Gastrocnemius medialis (tissue), 4 donors: ENCODE measurements at regions of chr14 and their contacts with region 1.

Region 1: GRCh38 chr14:65412032-65412846 is at the start of gene FUT8:
- DNase-seq: peak; percentile 90 to 95
- ATAC-seq: peak; percentile 77 to 83
- H3K4me3 ChIP-seq: peak within 1 kb of the TSS; percentile 79 to 98 (median 94)
- H3K27ac ChIP-seq: peak within 1 kb of the TSS; percentile 82 to 93 (median 90)
- H3K4me1 ChIP-seq: peaks cover 4 to 8% of the 10 kb centered on the region in 2 donors
- H3K27me3 ChIP-seq: no peaks in the 10 kb centered on the region
- CTCF ChIP-seq: peak; percentile 42 to 78 (median 58)
- POLR2A ChIP-seq: peak; percentile 50 to 55
- total RNA-seq, gene FUT8: 6.5 to 11.3 (median 9.3) TPM

Region 2: GRCh38 chr14:64914237-64914971 is 497.8 kb before region 1 on chr14 and contains the start of gene CHURC1:
- in situ Hi-C with region 1: no loop called
- intact Hi-C with region 1: loop called (anchors 5 kb)
- DNase-seq: peak; percentile 97 to 99
- ATAC-seq: peak; percentile 99
- H3K4me3 ChIP-seq: peak within 1 kb of the TSS; percentile 86 to 100 (median 90)
- H3K27ac ChIP-seq: peak within 1 kb of the TSS; percentile 95 to 98 (median 97)
- H3K4me1 ChIP-seq: peaks cover 34 to 39% of the 10 kb centered on the region in 2 donors
- H3K27me3 ChIP-seq: no peaks in the 10 kb centered on the region
- CTCF ChIP-seq: no peak
- POLR2A ChIP-seq: peak; percentile 79 to 91
- total RNA-seq, gene CHURC1: 47.9 to 108 (median 79.6) TPM

Region 3: DNA sequence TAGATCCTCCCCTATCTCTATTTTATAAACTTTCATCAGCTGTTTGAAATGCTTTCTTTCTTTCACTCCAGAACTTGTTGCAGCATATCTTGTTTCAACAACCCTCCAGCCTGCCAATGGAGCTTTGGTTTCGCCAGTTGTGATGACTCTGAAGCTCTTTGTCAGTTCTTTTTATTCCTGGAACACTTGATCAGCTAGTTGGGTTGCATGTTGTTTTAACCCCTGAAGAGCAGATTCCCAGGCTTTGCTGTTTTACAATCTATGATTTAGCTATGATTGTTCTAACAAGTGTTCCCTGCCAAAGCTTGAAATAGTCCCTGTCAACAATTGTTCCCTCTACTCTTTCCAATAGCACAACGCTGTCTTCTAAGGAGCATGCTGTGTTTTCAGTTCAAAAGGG is 50.3 kb before region 1 on chr14:
- in situ Hi-C with region 1: no loop called
- intact Hi-C with region 1: loop called (anchors 2 kb)
- DNase-seq: peak; percentile 71 to 79
- ATAC-seq: peak; percentile 97 to 98
- H3K4me3 ChIP-seq: no peak overlapping the region
- H3K27ac ChIP-seq: peak overlapping the region; percentile 72 to 81 (median 78)
- H3K4me1 ChIP-seq: peaks cover 35 to 39% of the 10 kb centered on the region in 2 donors
- H3K27me3 ChIP-seq: no peaks in the 10 kb centered on the region
- CTCF ChIP-seq: no peak
- POLR2A ChIP-seq: no peak

Region 4: DNA sequence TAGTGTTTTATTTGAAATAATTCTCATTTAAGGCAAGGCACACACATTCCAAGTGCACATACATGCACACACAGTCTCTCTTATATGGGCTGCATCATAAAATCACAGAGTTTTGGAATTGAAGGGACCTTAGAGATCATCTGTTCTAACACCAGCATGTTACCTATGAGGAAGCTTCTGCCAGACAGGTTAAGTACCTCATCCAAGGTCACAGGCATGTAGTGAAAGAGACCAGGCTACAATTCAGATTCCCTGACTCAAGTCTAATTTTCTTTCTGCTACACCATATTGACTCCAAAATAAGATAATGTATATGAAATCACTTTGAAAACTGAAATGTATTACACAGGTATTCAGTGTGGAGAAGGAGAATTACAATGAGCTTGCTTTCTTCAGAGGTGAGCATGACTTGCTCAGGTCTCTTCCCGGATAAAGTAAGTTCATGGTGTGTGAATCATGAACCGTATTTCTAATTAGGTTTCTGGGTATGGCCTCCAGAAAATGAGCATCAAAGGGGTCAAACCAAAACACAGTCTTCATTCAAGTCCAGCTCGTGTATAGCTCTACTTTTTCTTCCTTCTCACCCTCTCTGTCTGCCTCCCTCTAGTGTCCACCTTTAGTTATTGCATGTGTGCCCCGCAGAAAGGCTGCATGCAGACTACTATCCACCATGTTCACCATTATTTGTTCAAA is 412.2 kb after region 1 on chr14:
- in situ Hi-C with region 1: loop called in 3 of 4 experiments (anchors 10 kb)
- intact Hi-C with region 1: loop called (anchors 1 kb)
- DNase-seq: peak; percentile 10 to 39
- ATAC-seq: peak; percentile 84 to 88
- H3K4me3 ChIP-seq: no peak overlapping the region
- H3K27ac ChIP-seq: no peak overlapping the region
- H3K4me1 ChIP-seq: no peaks in the 10 kb centered on the region
- H3K27me3 ChIP-seq: no peaks in the 10 kb centered on the region
- CTCF ChIP-seq: peak; percentile 56 to 91 (median 78)
- POLR2A ChIP-seq: no peak

Region 5: DNA sequence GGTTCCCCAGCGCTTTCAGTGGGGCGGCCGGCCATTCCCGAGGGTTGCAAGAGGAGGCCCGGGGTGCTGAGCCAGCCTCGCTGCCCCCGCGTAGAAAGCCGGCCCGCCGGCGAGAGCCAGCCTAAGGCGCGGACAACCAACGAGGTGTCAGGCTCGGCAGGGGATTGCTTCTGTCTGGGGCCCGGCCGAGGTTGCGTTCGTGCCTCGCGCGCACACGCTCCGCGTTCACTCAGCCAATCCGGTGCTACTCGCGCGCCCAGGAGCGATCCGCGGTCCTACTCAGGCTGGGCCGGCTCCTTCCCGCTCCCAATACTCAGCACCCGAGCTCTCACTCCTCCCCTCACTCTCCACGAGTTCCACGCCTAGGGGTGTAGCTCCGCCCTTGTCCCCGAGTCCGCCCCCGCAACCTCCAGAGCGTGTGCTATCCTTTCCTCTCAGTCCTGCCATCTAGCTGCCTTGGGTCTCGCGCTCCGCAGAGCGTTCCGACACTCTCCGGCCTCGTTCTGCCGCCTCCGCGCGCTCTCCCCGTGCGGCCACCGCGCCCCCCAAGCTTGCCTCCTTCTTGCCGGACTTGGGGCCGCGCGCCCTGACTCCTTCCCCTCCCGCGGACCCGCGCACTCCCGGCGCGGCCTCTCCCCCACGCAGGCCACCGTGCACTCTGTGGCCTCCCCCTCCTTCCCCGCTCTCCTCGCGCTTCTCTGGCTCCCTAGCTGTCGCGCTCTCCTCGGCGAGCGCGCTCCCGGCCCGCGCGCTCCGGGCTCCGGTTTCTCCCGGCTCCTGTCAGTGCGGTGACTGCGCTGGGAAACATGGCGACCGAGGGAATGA is 1095.7 kb after region 1 on chr14 and contains the start of gene GPHN:
- in situ Hi-C with region 1: no loop called
- intact Hi-C with region 1: loop called (anchors 5 kb)
- DNase-seq: peak; percentile 96 to 98
- ATAC-seq: peak; percentile 88 to 90
- H3K4me3 ChIP-seq: peak within 1 kb of the TSS; percentile 87 to 96 (median 92)
- H3K27ac ChIP-seq: peak within 1 kb of the TSS; percentile 95 to 100 (median 96)
- H3K4me1 ChIP-seq: peaks cover 40 to 41% of the 10 kb centered on the region in 2 donors
- H3K27me3 ChIP-seq: no peaks in the 10 kb centered on the region
- CTCF ChIP-seq: peak in 3 of 5 experiments; percentile 18 to 53 (median 49)
- POLR2A ChIP-seq: peak; percentile 87 to 95
- total RNA-seq, gene GPHN: 10.3 to 33.3 (median 23.5) TPM